HAP-1 (cell line): ENCODE measurements at regions of chr2 and their contacts with region 1.

Region 1: DNA sequence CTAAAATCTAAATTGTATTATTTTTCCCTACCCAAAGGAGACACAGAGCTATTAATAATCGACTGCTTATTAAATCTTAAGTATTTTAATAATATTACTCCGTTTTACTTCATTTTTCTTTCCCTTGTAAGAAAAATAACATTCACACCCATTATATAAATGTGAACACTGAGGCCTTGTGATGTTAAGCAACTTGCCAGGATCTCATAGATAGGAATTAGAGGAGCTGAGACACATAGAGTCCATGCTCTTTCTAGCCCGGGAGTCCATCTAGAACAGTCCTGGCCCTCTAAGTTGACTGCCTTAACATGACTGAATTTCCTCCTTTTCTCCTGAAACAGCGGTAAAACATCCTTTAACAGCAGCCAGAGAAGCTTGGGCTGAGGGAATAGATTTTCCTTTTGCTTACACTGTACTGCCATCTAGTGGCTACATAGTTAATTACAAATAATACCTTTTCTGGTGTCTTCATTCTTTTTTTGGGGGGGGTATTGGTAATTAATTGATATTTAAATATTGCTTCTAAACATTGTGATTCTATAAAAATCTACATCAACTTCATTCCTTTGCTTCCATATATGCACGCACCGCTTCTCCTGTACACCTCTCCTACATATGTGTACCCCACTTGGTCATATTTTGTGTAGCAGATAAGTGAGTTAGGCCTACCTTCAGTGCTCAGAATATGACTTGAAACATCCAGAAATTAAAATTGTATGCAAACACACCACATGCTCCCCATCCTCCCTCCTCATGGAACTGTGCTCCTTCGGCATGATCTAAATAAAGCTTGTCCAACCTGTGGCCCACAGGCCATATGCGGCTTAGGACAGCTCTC is 125.8 kb upstream of the HNMT start:
- DNase-seq: peak; percentile 20 to 77
- H3K4me3 ChIP-seq: no peak overlapping the region
- H3K4me1 ChIP-seq: no peaks in the 10 kb centered on the region
- H3K27me3 ChIP-seq: no peaks in the 10 kb centered on the region

Region 2: DNA sequence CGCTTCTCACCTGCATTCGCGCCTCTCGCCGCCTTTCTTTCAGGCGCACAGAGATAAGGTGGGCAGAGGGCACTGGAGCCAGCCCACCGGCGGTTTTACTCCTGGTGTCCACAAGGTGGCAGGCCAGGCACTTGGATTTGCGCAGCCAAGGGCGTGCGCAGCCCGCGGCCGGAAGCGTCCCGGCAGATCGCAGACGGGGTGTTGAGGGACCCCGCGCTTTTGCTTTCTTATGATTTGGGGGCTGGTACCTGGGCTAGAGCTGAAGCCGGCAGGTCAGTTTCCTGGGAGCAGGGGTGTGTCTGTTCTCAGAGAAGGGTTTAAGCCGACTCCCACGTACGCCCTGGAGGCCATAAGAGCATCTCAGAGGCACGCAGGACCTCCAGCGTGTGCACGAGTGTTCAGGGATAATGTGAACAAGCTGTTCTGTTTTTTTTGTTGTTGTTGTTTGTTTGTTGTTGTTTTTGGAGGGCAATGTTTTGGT is 1414.9 kb before region 1 on chr2:
- in situ Hi-C with region 1: loop called (anchors 25 kb)
- DNase-seq: peak; percentile 65 to 86
- H3K4me3 ChIP-seq: peak overlapping the region; percentile 28
- H3K4me1 ChIP-seq: no peaks in the 10 kb centered on the region; the same call in 1 of the 2 replicates
- H3K27me3 ChIP-seq: peaks cover 19% of the 10 kb centered on the region

Region 3: GRCh38 chr2:136932700-136933099 is 905.8 kb before region 1 on chr2:
- in situ Hi-C with region 1: loop called (anchors 5 kb)
- DNase-seq: peak; percentile 42 to 59
- H3K4me3 ChIP-seq: no peak overlapping the region
- H3K4me1 ChIP-seq: no peaks in the 10 kb centered on the region
- H3K27me3 ChIP-seq: no peaks in the 10 kb centered on the region

Region 4: DNA sequence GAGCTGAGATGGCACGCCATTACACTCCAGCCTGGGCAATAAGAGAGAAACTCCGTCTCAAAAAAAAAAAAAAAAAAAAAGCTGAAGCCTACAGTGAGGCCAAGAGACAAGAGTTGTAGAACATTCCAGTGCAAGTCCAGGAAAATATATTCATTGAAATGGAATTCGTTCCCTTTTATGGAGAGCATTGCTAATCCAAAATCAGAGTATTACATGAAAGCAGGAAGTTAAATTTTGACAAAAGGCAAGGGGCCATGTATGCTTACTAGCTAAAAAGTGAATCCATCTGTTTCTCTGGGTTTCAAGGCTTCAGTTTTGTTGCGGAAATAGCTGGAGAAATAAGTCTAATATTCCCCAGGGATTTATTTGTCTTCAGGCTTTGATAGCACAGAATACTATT is 601.4 kb before region 1 on chr2:
- in situ Hi-C with region 1: loop called (anchors 25 kb)
- DNase-seq: no peak
- H3K4me3 ChIP-seq: no peak overlapping the region
- H3K4me1 ChIP-seq: no peaks in the 10 kb centered on the region
- H3K27me3 ChIP-seq: no peaks in the 10 kb centered on the region

Region 5: GRCh38 chr2:137467246-137467862 is 371.1 kb before region 1 on chr2:
- in situ Hi-C with region 1: loop called (anchors 25 kb)
- DNase-seq: peak; percentile 46 to 77
- H3K4me3 ChIP-seq: no peak overlapping the region
- H3K4me1 ChIP-seq: peaks cover 7% of the 10 kb centered on the region; the same call in 1 of the 2 replicates
- H3K27me3 ChIP-seq: no peaks in the 10 kb centered on the region

Region 6: DNA sequence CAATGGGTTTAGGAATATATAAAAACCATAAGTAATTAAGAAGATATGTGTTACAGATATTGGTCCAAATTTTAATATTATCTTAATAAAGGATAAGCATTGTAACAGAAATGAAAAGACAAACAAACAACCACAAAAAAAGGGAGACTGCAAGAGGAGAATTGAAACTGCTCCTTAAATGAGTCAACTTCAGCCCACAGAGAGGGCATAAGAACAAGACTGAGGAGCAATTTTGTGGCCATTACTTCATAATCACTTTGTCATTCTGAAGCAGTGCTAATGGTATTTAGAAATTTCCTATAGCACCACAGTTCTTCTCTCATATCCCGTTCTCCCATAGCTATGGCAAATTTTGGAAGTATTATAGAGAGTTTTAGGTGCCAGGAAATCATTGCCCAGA is 67.4 kb before region 1 on chr2:
- in situ Hi-C with region 1: no loop called
- DNase-seq: no peak
- H3K4me3 ChIP-seq: no peak overlapping the region
- H3K4me1 ChIP-seq: peaks cover 48% of the 10 kb centered on the region
- H3K27me3 ChIP-seq: no peaks in the 10 kb centered on the region